Caco-2 (cell line): ENCODE measurements at regions of chr7 and their contacts with region 1.

Region 1: GRCh38 chr7:124784879-124785818 is 19.6 kb upstream of the GPR37 start:
- DNase-seq: peak; percentile 50 to 56
- H3K4me3 ChIP-seq: no peak overlapping the region
- H3K4me3 Mint-ChIP-seq: no peak overlapping the region
- H3K27ac Mint-ChIP-seq: no peak overlapping the region
- H3K4me1 ChIP-seq: no peaks in the 10 kb centered on the region
- H3K4me1 Mint-ChIP-seq: no peaks in the 10 kb centered on the region
- H3K27me3 ChIP-seq: no peaks in the 10 kb centered on the region
- H3K27me3 Mint-ChIP-seq: peaks cover 10% of the 10 kb centered on the region
- CTCF ChIP-seq: peak; percentile 74 to 87

Region 2: GRCh38 chr7:124171068-124171467 is 614.1 kb before region 1 on chr7:
- CTCF ChIA-PET with region 1: no interaction called
- POLR2A ChIA-PET with region 1: no interaction called
- intact Hi-C with region 1: loop called (anchors 1 kb)
- DNase-seq: peak in 1 of 2 experiments; percentile 20
- H3K4me3 ChIP-seq: no peak overlapping the region
- H3K4me3 Mint-ChIP-seq: no peak overlapping the region
- H3K27ac Mint-ChIP-seq: no peak overlapping the region
- H3K4me1 ChIP-seq: no peaks in the 10 kb centered on the region
- H3K4me1 Mint-ChIP-seq: no peaks in the 10 kb centered on the region
- H3K27me3 ChIP-seq: no peaks in the 10 kb centered on the region
- H3K27me3 Mint-ChIP-seq: peaks cover 3% of the 10 kb centered on the region
- CTCF ChIP-seq: peak in 1 of 2 experiments; percentile 46

Region 3: DNA sequence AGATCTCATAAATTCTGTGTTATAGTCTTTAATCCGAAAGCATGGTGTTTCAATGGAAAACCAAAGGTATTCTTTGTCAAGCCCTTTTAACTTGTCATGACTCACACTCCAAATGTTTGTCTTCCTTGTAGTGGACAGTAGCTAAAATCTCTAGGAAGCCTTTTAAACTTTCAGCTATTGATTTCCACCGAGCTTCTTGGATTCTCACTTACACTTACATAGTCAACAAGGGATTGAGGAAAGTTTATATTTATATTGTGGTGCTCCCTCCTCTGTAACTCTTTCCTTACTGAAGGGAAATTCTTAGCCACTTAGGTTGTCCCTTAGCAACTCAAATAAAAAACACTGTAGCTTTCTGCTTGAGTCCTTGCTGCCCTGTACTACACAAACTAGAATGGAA is 11.6 kb after region 1 on chr7:
- CTCF ChIA-PET with region 1: no interaction called
- POLR2A ChIA-PET with region 1: no interaction called
- intact Hi-C with region 1: no loop called
- DNase-seq: no peak
- H3K4me3 ChIP-seq: no peak overlapping the region
- H3K4me3 Mint-ChIP-seq: no peak overlapping the region
- H3K27ac Mint-ChIP-seq: no peak overlapping the region
- H3K4me1 ChIP-seq: peaks cover 10% of the 10 kb centered on the region
- H3K4me1 Mint-ChIP-seq: peaks cover 24% of the 10 kb centered on the region
- H3K27me3 ChIP-seq: no peaks in the 10 kb centered on the region
- H3K27me3 Mint-ChIP-seq: no peaks in the 10 kb centered on the region
- CTCF ChIP-seq: no peak

Region 4: GRCh38 chr7:124929467-124930172 is 144.5 kb after region 1 on chr7 and contains the start of gene POT1:
- CTCF ChIA-PET with region 1: no interaction called
- POLR2A ChIA-PET with region 1: no interaction called
- intact Hi-C with region 1: no loop called
- DNase-seq: peak; percentile 98 to 99
- H3K4me3 ChIP-seq: peak within 1 kb of the TSS; percentile 59
- H3K4me3 Mint-ChIP-seq: peak within 1 kb of the TSS; percentile 97
- H3K27ac Mint-ChIP-seq: peak within 1 kb of the TSS; percentile 95
- H3K4me1 ChIP-seq: peaks cover 5% of the 10 kb centered on the region
- H3K4me1 Mint-ChIP-seq: no peaks in the 10 kb centered on the region
- H3K27me3 ChIP-seq: no peaks in the 10 kb centered on the region
- H3K27me3 Mint-ChIP-seq: no peaks in the 10 kb centered on the region
- CTCF ChIP-seq: no peak
- total RNA-seq, gene POT1: 21.6 and 27.1 TPM in 2 replicates